CD4-positive, alpha-beta memory T cell (primary cell): ENCODE measurements at regions of chr5 and their contacts with region 1.

Region 1: GRCh38 chr5:151223469-151224264 is at the start of gene CCDC69:
- DNase-seq: peak; percentile 42 to 57 (median 47)
- H3K4me3 ChIP-seq: peak within 1 kb of the TSS; percentile 59 to 88
- H3K4me3 Mint-ChIP-seq: peak within 1 kb of the TSS; percentile 85 to 97 (median 92)
- H3K27ac ChIP-seq: peak within 1 kb of the TSS; percentile 96
- H3K27ac Mint-ChIP-seq: peak within 1 kb of the TSS; percentile 93 to 96 (median 95)
- H3K4me1 ChIP-seq: peaks cover 68% of the 10 kb centered on the region
- H3K4me1 Mint-ChIP-seq: peaks cover 46 to 67% (median 56%) of the 10 kb centered on the region in 4 donors
- H3K27me3 ChIP-seq: no peaks in the 10 kb centered on the region
- H3K27me3 Mint-ChIP-seq: no peaks in the 10 kb centered on the region
- total RNA-seq, gene CCDC69: 93.5 to 93.9 TPM

Region 2: DNA sequence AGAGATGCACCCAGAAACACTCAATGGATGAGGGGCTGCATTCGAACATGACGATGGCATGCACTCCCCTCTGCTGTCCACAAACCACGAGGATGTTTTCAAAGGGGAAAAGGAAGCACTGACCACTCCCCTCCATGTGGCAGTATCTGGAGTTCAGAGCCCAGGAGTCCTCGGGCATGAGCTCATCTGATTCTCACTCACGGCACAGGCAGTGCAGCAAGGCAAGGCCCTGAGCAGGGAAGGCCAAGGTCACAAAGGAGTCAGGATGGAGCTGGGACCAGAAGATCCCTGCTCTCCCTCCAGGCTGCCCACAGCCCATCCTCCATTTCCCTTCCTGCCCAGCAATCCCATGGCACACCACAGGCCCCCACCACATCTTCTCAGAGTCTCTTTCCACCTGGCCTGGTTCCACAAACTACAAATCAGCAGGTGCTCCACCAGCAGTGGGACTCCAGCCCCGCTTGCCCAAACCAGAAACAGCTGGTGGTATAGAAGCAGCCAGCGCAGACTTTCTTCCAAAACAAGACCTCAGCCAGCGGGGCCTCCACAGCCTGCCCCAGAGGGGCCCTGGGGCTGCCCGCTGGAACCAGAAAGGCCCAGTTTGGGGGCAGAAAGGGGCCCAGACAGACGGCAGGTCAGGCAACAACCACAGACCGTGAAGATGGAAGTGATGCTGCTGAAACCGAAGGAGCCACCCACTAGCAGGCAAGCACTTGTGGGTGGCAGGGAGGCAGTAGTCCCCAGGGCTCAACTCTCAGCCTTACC is 155.1 kb before region 1 on chr5:
- CTCF ChIA-PET with region 1: no interaction called
- POLR2A ChIA-PET with region 1: no interaction called
- intact Hi-C with region 1: loop called (anchors 10 kb)
- DNase-seq: peak in 1 of 5 donors; percentile 10
- H3K4me3 ChIP-seq: no peak overlapping the region
- H3K4me3 Mint-ChIP-seq: peak overlapping the region in 7 of 8 donors; percentile 12 to 61 (median 52)
- H3K27ac ChIP-seq: peak overlapping the region; percentile 29
- H3K27ac Mint-ChIP-seq: peak overlapping the region; percentile 25 to 87 (median 81)
- H3K4me1 ChIP-seq: peaks cover 85% of the 10 kb centered on the region
- H3K4me1 Mint-ChIP-seq: peaks cover 60 to 86% (median 74%) of the 10 kb centered on the region in 4 donors
- H3K27me3 ChIP-seq: no peaks in the 10 kb centered on the region
- H3K27me3 Mint-ChIP-seq: no peaks in the 10 kb centered on the region

Region 3: DNA sequence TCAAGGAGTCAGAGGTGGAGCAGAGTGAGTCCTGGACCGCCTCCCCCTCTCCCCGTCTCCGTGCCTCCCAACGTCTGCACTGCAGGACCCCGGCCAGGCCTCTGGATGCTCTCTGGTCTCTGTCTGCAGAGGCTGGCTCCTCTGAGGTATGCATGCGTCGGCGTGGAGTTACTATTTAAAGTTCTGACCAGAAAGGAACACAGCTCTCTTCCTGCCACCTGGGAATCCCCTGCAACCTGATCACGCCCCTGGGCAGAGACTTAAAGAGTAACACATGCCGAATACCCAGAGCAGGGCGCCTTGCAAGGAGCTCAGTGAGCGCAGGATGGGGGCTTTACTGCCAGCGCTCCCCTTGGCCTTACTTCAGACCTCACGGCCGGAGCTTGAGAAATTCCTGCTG is 82.1 kb before region 1 on chr5:
- CTCF ChIA-PET with region 1: interaction called, 3 read pairs
- POLR2A ChIA-PET with region 1: interaction called, 10 read pairs
- intact Hi-C with region 1: no loop called
- DNase-seq: peak; percentile 47 to 84 (median 58)
- H3K4me3 ChIP-seq: peak overlapping the region in 1 of 2 donors; percentile 23
- H3K4me3 Mint-ChIP-seq: peak overlapping the region; percentile 71 to 91 (median 84)
- H3K27ac ChIP-seq: peak overlapping the region; percentile 68
- H3K27ac Mint-ChIP-seq: peak overlapping the region; percentile 90 to 97 (median 94)
- H3K4me1 ChIP-seq: peaks cover 91% of the 10 kb centered on the region
- H3K4me1 Mint-ChIP-seq: peaks cover 75 to 100% (median 94%) of the 10 kb centered on the region in 4 donors
- H3K27me3 ChIP-seq: no peaks in the 10 kb centered on the region
- H3K27me3 Mint-ChIP-seq: no peaks in the 10 kb centered on the region

Region 4: GRCh38 chr5:151157426-151158286 is 66.0 kb before region 1 on chr5 and contains the start of gene ANXA6:
- CTCF ChIA-PET with region 1: no interaction called
- POLR2A ChIA-PET with region 1: interaction called, 11 read pairs
- intact Hi-C with region 1: loop called (anchors 2 kb)
- DNase-seq: peak; percentile 58 to 71 (median 64)
- H3K4me3 ChIP-seq: peak within 1 kb of the TSS; percentile 80 to 90
- H3K4me3 Mint-ChIP-seq: peak within 1 kb of the TSS; percentile 91 to 99 (median 97)
- H3K27ac ChIP-seq: peak within 1 kb of the TSS; percentile 84
- H3K27ac Mint-ChIP-seq: peak within 1 kb of the TSS; percentile 93 to 99 (median 97)
- H3K4me1 ChIP-seq: peaks cover 55% of the 10 kb centered on the region
- H3K4me1 Mint-ChIP-seq: peaks cover 37 to 73% (median 51%) of the 10 kb centered on the region in 4 donors
- H3K27me3 ChIP-seq: no peaks in the 10 kb centered on the region
- H3K27me3 Mint-ChIP-seq: no peaks in the 10 kb centered on the region
- total RNA-seq, gene ANXA6: 318 to 342 TPM

Region 5: GRCh38 chr5:151174612-151175101 is 49.0 kb before region 1 on chr5:
- CTCF ChIA-PET with region 1: interaction called, 3 read pairs
- POLR2A ChIA-PET with region 1: interaction called, 8 read pairs
- intact Hi-C with region 1: loop called (anchors 5 kb)
- DNase-seq: no peak
- H3K4me3 ChIP-seq: no peak overlapping the region
- H3K4me3 Mint-ChIP-seq: no peak overlapping the region
- H3K27ac ChIP-seq: no peak overlapping the region
- H3K27ac Mint-ChIP-seq: peak overlapping the region in 1 of 7 donors; percentile 89
- H3K4me1 ChIP-seq: peaks cover 8% of the 10 kb centered on the region
- H3K4me1 Mint-ChIP-seq: peaks cover 17 to 19% (median 18%) of the 10 kb centered on the region in 4 donors
- H3K27me3 ChIP-seq: no peaks in the 10 kb centered on the region
- H3K27me3 Mint-ChIP-seq: no peaks in the 10 kb centered on the region

Region 6: DNA sequence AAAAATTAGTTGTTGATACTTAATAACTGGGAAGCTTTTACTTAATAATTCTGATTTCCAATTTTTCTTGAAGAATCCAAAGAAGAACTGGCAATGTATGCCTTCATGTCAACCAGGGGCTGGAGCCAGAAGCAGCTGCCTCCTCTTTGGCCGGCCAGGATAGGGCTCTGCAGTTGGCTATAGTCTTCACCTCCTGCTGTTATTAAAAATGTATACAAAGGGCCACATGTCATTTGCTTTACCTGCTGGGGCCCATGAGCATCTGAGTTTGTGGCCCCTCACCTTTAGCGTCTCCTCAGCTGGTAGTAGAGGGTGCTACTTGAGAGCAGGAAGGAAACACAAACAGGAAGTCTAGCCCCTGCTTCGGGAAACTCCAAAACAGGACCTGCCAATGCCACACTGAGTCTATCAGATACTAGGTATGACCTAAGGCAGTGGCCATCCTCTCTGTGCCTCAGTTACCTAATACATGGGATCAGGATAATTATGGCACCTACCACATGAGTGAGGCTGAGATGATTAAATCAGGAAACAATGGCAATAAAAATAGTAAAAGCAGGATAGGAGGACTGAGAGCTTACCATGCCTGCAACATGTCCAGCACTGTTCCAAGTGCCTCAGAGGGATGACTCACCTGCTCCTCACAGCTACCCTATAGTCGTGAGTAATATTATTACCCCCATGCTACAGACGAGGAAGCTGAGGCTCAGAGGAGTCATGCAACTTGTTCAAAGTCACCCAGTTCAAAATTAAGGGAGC is 21.1 kb before region 1 on chr5:
- CTCF ChIA-PET with region 1: interaction called, 16 read pairs
- POLR2A ChIA-PET with region 1: interaction called, 21 read pairs
- intact Hi-C with region 1: no loop called
- DNase-seq: peak in 1 of 5 donors; percentile 74
- H3K4me3 ChIP-seq: no peak overlapping the region
- H3K4me3 Mint-ChIP-seq: peak overlapping the region in 7 of 8 donors; percentile 28 to 76 (median 55)
- H3K27ac ChIP-seq: peak overlapping the region; percentile 25
- H3K27ac Mint-ChIP-seq: peak overlapping the region; percentile 85 to 93 (median 90)
- H3K4me1 ChIP-seq: peaks cover 32% of the 10 kb centered on the region
- H3K4me1 Mint-ChIP-seq: peaks cover 25 to 46% (median 33%) of the 10 kb centered on the region in 4 donors
- H3K27me3 ChIP-seq: no peaks in the 10 kb centered on the region
- H3K27me3 Mint-ChIP-seq: no peaks in the 10 kb centered on the region

Region 7: DNA sequence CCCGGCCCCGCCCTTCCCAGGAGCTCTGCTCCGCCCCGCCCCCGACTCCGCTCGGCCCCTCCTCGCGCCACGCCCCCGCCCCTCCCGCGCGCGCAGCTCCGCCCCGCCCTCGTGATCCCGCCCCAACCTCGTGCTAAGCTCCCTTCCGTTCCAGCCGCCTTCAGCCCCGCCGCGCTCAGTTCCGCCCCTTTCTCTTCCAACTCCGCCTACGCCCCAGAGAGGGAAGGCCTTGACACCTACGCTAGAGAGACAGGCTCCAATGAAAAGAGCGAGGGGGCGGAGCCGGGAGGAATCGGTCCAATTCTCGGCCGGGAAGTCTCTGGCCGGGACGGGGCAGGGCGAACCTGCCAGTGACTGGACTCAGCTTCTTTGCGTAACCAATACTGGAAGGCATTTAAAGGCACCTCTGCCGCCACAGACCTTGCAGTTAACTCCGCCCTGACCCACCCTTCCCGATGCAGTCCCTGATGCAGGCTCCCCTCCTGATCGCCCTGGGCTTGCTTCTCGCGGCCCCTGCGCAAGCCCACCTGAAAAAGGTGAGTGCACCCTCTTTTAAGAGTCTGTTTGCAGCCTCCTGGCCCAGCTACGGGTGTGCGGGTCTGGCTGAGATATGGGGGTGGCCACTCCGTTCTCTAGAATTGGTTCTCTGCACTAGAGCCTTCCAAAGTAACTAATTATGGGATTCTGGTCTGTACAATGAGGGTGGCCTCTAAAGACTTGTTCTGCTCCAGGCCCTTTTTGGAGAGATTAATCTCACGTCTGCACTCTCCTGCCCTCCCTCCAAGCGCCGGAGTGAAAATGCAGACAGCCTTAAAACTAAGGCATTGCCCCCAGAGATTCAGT is 29.3 kb after region 1 on chr5 and contains the start of gene GM2A:
- CTCF ChIA-PET with region 1: interaction called, 5 read pairs
- POLR2A ChIA-PET with region 1: interaction called, 78 read pairs
- intact Hi-C with region 1: loop called (anchors 1 kb)
- DNase-seq: peak; percentile 96 to 99 (median 97)
- H3K4me3 ChIP-seq: peak within 1 kb of the TSS; percentile 64 to 68
- H3K4me3 Mint-ChIP-seq: peak within 1 kb of the TSS; percentile 89 to 97 (median 94)
- H3K27ac ChIP-seq: peak within 1 kb of the TSS; percentile 66
- H3K27ac Mint-ChIP-seq: peak within 1 kb of the TSS; percentile 86 to 96 (median 94)
- H3K4me1 ChIP-seq: peaks cover 37% of the 10 kb centered on the region
- H3K4me1 Mint-ChIP-seq: peaks cover 17 to 59% (median 36%) of the 10 kb centered on the region in 4 donors
- H3K27me3 ChIP-seq: no peaks in the 10 kb centered on the region
- H3K27me3 Mint-ChIP-seq: no peaks in the 10 kb centered on the region
- total RNA-seq, gene GM2A: 20.4 to 23.1 TPM

Region 8: DNA sequence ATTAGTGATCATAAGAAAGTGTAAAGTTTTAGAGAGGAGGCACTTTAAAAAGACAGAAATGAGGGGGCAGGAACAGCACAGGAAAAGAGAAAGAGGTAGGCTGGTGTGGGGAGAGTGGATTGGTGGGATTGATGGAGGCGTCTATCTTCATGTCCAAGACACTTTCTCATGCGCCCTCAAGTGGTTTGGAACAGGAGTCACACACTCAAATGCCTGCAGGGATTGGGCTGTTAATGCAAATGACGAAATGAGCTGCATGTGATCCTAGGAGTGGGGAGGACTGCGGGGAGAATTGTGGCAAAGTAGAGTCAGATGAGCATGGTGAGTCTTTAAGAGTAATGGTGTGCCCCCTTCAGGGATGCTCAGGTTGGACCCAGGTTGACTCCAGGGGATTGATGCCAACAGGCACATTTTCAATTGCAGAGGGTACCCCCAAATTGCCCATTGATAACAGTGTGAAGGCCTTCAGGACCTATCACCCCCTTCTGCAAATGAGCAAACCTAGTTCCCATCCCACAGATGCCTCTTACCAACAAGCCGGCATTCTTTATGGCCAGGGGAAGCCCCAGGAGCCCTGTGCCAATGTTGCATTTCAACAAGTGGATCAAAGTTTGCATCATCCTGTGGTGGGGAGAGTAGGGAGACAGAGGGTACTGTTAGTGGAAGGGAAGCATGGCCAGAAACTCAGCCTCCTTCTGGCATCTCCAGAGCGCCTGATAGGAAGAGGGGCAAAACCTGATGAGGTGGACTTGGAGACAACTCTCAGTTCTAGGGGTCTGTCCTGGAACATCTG is 74.6 kb after region 1 on chr5:
- CTCF ChIA-PET with region 1: no interaction called
- POLR2A ChIA-PET with region 1: no interaction called
- intact Hi-C with region 1: no loop called
- DNase-seq: peak in 2 of 5 donors; percentile 5 to 9
- H3K4me3 ChIP-seq: no peak overlapping the region
- H3K4me3 Mint-ChIP-seq: peak overlapping the region in 2 of 8 donors; percentile 16 to 27
- H3K27ac ChIP-seq: no peak overlapping the region
- H3K27ac Mint-ChIP-seq: peak overlapping the region in 1 of 7 donors; percentile 17
- H3K4me1 ChIP-seq: no peaks in the 10 kb centered on the region
- H3K4me1 Mint-ChIP-seq: no peaks in the 10 kb centered on the region
- H3K27me3 ChIP-seq: no peaks in the 10 kb centered on the region
- H3K27me3 Mint-ChIP-seq: peaks cover 12 to 13% of the 10 kb centered on the region in 2 donors